PC-9 (cell line): ENCODE measurements at regions of chr12 and their contacts with region 1.

Region 1: GRCh38 chr12:62361048-62361447 is 100.8 kb downstream of the USP15 start:
- DNase-seq: no peak
- H3K4me3 ChIP-seq: no peak overlapping the region
- H3K27ac ChIP-seq: no peak overlapping the region
- H3K4me1 ChIP-seq: no peaks in the 10 kb centered on the region
- H3K27me3 ChIP-seq: no peaks in the 10 kb centered on the region
- CTCF ChIP-seq: no peak

Region 2: DNA sequence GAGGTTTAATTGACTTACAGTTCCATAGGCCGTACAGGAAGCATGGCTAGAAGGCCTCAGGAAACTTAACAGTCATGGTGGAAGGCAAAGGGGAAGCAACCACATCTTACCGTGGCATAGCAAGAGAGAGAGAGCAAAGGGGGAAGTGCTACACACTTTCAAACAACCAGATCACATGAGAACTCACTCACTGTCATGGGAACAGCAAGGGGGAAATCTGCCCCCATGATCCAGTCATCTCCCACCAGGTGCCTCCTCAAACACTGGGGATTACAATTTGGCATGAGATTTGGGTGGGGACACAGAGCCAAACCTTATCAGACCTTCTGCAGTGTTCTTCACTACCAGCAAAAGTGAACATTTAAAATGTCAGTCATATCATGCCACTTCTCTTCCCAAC is 42.0 kb before region 1 on chr12:
- CTCF ChIA-PET with region 1: no interaction called
- POLR2A ChIA-PET with region 1: no interaction called
- intact Hi-C with region 1: no loop called
- DNase-seq: no peak
- H3K4me3 ChIP-seq: no peak overlapping the region
- H3K27ac ChIP-seq: no peak overlapping the region
- H3K4me1 ChIP-seq: no peaks in the 10 kb centered on the region
- H3K27me3 ChIP-seq: no peaks in the 10 kb centered on the region
- CTCF ChIP-seq: no peak

Region 3: GRCh38 chr12:62372137-62372536 is 11.1 kb after region 1 on chr12:
- CTCF ChIA-PET with region 1: no interaction called
- POLR2A ChIA-PET with region 1: interaction called, 11 read pairs
- intact Hi-C with region 1: no loop called
- DNase-seq: no peak
- H3K4me3 ChIP-seq: no peak overlapping the region
- H3K27ac ChIP-seq: no peak overlapping the region
- H3K4me1 ChIP-seq: no peaks in the 10 kb centered on the region
- H3K27me3 ChIP-seq: no peaks in the 10 kb centered on the region
- CTCF ChIP-seq: no peak